Astrocyte of the cerebellum (primary cell): ENCODE measurements at regions of chr1 and their contacts with region 1.

Region 1: GRCh38 chr1:231590453-231591198 is 36.0 kb upstream of the DISC1 start:
- DNase-seq: peak; percentile 49
- H3K4me3 ChIP-seq: no peak overlapping the region
- CTCF ChIP-seq: peak; percentile 84

Region 2: DNA sequence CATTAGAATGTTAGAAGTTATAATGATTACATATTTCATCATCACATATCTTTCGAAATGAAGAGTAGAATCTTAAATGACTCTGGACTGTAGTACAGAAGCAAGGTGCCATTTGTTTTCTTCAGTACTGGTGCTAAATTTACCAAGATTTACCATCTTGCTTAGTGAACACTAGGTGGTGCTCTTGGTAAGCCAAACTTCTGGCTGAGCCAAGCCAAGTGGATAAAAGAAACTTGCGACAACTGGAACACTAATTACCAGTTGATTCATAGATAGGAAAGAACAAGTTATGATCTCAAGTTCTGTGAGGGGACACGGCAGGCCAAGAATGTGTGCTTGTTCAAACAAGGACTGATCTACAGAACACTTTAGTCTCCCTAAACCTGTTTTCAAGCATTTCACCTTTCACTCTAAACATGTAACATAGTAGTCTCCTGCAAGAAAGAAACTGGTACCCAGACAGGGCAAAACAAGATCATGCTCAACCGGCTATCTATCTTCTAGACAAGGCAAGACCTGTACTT is 232.7 kb before region 1 on chr1:
- in situ Hi-C with region 1: loop called (anchors 25 kb)
- DNase-seq: peak; percentile 57
- H3K4me3 ChIP-seq: no peak overlapping the region
- CTCF ChIP-seq: peak; percentile 65